ENCODE measurements at regions of chr2 and their contacts with region 1.

Region 1: DNA sequence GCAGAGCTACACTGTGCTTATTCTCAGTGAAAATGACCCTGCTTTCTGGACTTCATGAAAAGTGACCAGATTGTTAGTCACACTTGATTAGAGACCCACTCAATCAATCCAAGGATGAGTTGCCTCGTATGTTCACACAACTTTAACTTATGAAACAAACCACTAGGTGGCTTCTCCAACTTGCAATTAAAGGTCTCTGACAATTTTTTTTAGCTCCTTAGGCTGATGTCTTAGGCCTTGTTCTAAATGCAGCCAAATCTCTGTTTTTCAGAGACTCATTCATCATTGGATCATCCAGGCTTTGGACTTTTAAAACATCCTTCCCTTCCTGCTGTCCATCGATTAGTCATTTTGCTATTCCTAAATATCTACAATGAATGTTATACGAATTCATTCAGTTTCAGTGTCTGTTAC is 63.4 kb downstream of the MREG start:
- DNase-seq: no peak
- H3K4me3 ChIP-seq: no peak overlapping the region
- H3K27ac ChIP-seq: no peak overlapping the region
- H3K4me1 ChIP-seq: no peaks in the 10 kb centered on the region
- H3K27me3 ChIP-seq: no peaks in the 10 kb centered on the region
- CTCF ChIP-seq: peak in 2 of 3 experiments; percentile 52 to 59; a peak in 2 of 4 replicates
- EP300 ChIP-seq: no peak
- POLR2A ChIP-seq: no peak
- RAD21 ChIP-seq: peak; percentile 51 to 55

Region 2: DNA sequence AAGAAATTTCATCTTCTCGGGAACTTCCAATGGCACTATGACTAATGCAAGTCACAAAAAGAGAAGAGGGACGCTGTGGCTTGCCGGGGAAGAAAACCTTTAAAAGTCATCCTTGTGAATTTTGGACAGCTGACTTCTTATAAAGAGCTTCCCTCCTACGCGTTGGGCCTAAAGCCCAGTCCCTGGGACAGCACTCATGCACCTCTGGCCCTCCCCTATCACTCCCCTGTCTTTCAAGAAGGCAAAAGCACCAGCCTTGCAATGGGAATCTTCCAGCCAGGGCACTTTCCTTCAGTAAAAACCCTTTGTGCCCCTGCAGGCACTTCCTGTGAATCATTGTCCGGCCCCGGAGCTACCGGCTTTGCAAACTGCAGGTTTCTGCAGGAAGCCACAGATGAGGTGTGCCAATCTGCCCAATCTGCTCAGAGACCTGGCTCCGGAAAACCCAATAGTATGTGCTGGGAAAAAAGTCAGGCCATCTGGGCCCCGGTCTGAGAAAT is 56.2 kb after region 1 on chr2:
- CTCF ChIA-PET with region 1: interaction called, 14 read pairs
- POLR2A ChIA-PET with region 1: no interaction called
- DNase-seq: peak; percentile 39 to 73
- H3K4me3 ChIP-seq: no peak overlapping the region
- H3K27ac ChIP-seq: no peak overlapping the region; the same call in 1 of the 2 replicates
- H3K4me1 ChIP-seq: peaks cover 7 to 28% (median 13%) of the 10 kb centered on the region in 4 experiments
- H3K27me3 ChIP-seq: no peaks in the 10 kb centered on the region
- CTCF ChIP-seq: no peak
- EP300 ChIP-seq: no peak
- POLR2A ChIP-seq: 0 out of 3 replicates have a peak, but pooled peaks of 1 of the 2 experiments have one; percentile 19
- RAD21 ChIP-seq: 0 out of 4 replicates have a peak, but pooled peaks of 1 of the 2 experiments have one; percentile 4

Region 3: GRCh38 chr2:216013080-216013909 is 63.3 kb after region 1 on chr2 and contains the start of gene MREG:
- CTCF ChIA-PET with region 1: interaction called, 13 read pairs
- POLR2A ChIA-PET with region 1: interaction called, 3 read pairs
- DNase-seq: peak; percentile 62 to 93
- H3K4me3 ChIP-seq: peak within 1 kb of the TSS; percentile 55 to 87 (median 80)
- H3K27ac ChIP-seq: peak within 1 kb of the TSS; percentile 86
- H3K4me1 ChIP-seq: peaks cover 0 to 3% (median 2%) of the 10 kb centered on the region in 4 experiments; a peak in 4 of 7 replicates
- H3K27me3 ChIP-seq: no peaks in the 10 kb centered on the region
- CTCF ChIP-seq: peak; percentile 60 to 69 (median 63)
- EP300 ChIP-seq: no peak
- POLR2A ChIP-seq: peak; percentile 35 to 82
- RAD21 ChIP-seq: peak; percentile 25 to 38; a peak in 3 of 4 replicates
- total RNA-seq, gene MREG: 28.4 and 31.9 TPM in 2 replicates

Region 4: DNA sequence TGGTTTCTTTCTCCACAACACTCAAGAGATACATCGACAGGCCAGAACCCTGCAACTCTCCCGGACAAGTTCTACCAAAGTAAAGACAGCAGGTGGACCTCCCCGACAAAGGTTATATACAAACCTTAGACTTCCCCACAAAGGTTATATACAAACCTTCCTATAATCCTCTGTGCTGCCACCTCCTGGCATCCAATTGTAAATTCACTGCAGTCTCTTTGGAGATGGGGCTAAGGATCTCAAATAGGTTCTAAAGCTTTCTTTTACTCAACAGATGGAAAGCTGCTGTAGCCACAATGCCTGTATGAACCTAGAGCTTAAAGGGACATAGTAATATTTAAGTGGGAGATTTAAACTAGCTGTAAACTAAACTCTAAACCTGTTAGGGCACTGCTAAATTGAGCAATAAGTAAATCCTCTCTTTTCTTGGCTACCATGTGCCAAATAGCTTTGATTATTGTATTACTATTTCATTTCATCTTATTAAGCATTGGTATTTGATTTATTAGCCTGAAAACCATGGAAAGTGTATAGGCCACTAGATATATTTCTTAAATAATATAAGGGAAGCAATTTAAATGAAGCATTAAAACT is 73.2 kb after region 1 on chr2:
- CTCF ChIA-PET with region 1: interaction called, 47 read pairs
- POLR2A ChIA-PET with region 1: interaction called, 3 read pairs
- DNase-seq: peak; percentile 31 to 70
- H3K4me3 ChIP-seq: no peak overlapping the region
- H3K27ac ChIP-seq: no peak overlapping the region
- H3K4me1 ChIP-seq: no peaks in the 10 kb centered on the region
- H3K27me3 ChIP-seq: no peaks in the 10 kb centered on the region
- CTCF ChIP-seq: peak in 2 of 3 experiments; percentile 67 to 74; a peak in 3 of 4 replicates
- EP300 ChIP-seq: no peak
- POLR2A ChIP-seq: no peak
- RAD21 ChIP-seq: peak; percentile 55 to 58

Measured in H1 (cell line).